Psoas muscle (tissue), 8 donors: ENCODE measurements at regions of chr16 and their contacts with region 1.

Region 1: DNA sequence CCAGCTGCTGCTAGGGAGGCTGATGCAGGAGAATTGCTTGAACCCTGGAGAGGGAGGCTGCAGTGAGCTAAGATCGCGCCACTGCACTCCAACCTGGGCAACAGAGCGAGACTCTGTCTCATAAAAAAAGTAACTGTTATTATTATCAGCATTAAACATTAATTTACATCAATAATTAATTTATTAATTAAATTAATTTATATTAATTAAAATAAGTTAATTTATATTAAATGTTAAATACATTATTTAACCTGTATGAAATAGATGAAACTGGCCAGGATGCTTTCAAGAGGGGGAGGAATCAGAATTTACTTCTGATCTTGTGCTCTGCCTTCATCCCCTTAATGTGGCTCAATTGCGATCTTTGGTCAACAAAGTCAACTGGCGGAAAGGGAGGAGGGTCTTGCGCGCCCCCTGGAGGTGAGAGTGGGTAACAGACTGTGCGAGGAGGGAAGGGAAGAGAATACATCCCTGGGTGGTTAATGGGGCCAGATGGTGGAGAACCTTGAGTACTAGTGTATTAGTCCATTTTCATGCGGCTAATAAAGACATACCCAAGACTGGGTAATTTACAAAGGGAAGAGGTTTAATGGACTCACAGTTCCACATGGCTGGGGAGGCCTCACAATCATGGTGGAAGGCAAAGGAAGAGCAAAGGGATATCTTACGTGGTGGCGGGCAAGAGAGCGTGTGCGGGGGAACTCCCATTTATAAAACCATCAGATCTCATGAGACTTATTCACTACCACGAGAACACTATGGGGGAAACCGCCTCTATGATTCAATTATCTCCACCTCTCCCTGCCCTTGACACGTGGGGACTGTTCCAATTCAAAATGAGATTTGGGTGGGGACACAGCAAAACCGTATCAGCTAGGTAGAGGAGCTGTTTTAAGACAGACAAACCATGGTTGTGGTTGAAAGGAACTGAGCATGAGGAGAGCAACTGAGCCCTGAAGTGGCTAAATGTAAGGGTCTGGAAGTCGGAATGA is 15.7 kb upstream of the CPPED1 start:
- DNase-seq: peak; percentile 61 to 71
- ATAC-seq: peak in 2 of 4 donors; percentile 46 to 55
- H3K4me3 ChIP-seq: no peak overlapping the region
- H3K27ac ChIP-seq: no peak overlapping the region
- H3K4me1 ChIP-seq: no peaks in the 10 kb centered on the region
- H3K27me3 ChIP-seq: peaks cover 0 to 2% (median 0%) of the 10 kb centered on the region in 3 donors
- CTCF ChIP-seq: peak; percentile 67

Region 2: GRCh38 chr16:12002447-12003006 is 816.9 kb before region 1 on chr16:
- intact Hi-C with region 1: no loop called
- DNase-seq: no peak
- ATAC-seq: no peak
- H3K4me3 ChIP-seq: no peak overlapping the region
- H3K27ac ChIP-seq: no peak overlapping the region
- H3K4me1 ChIP-seq: no peaks in the 10 kb centered on the region
- H3K27me3 ChIP-seq: no peaks in the 10 kb centered on the region
- CTCF ChIP-seq: no peak

Region 3: GRCh38 chr16:12455287-12455798 is 364.1 kb before region 1 on chr16:
- intact Hi-C with region 1: loop called (anchors 10 kb)
- DNase-seq: peak; percentile 35 to 65
- ATAC-seq: peak; percentile 79 to 84 (median 82)
- H3K4me3 ChIP-seq: no peak overlapping the region
- H3K27ac ChIP-seq: no peak overlapping the region
- H3K4me1 ChIP-seq: no peaks in the 10 kb centered on the region
- H3K27me3 ChIP-seq: no peaks in the 10 kb centered on the region
- CTCF ChIP-seq: peak; percentile 79

Region 4: GRCh38 chr16:12500771-12501170 is 318.7 kb before region 1 on chr16:
- intact Hi-C with region 1: no loop called
- DNase-seq: no peak
- ATAC-seq: peak in 1 of 4 donors; percentile 43
- H3K4me3 ChIP-seq: no peak overlapping the region
- H3K27ac ChIP-seq: no peak overlapping the region
- H3K4me1 ChIP-seq: no peaks in the 10 kb centered on the region
- H3K27me3 ChIP-seq: no peaks in the 10 kb centered on the region
- CTCF ChIP-seq: no peak

Region 5: GRCh38 chr16:12573730-12574383 is 245.6 kb before region 1 on chr16:
- intact Hi-C with region 1: loop called in 1 of 2 experiments (anchors 5 kb)
- DNase-seq: no peak
- ATAC-seq: no peak
- H3K4me3 ChIP-seq: no peak overlapping the region
- H3K27ac ChIP-seq: no peak overlapping the region
- H3K4me1 ChIP-seq: no peaks in the 10 kb centered on the region
- H3K27me3 ChIP-seq: no peaks in the 10 kb centered on the region
- CTCF ChIP-seq: peak; percentile 30

Region 6: GRCh38 chr16:13176711-13177110 is 357.3 kb after region 1 on chr16:
- intact Hi-C with region 1: no loop called
- DNase-seq: no peak
- ATAC-seq: no peak
- H3K4me3 ChIP-seq: no peak overlapping the region
- H3K27ac ChIP-seq: no peak overlapping the region
- H3K4me1 ChIP-seq: no peaks in the 10 kb centered on the region
- H3K27me3 ChIP-seq: no peaks in the 10 kb centered on the region
- CTCF ChIP-seq: no peak